ENCODE measurements at regions of chr1 and their contacts with region 1.

Region 1: DNA sequence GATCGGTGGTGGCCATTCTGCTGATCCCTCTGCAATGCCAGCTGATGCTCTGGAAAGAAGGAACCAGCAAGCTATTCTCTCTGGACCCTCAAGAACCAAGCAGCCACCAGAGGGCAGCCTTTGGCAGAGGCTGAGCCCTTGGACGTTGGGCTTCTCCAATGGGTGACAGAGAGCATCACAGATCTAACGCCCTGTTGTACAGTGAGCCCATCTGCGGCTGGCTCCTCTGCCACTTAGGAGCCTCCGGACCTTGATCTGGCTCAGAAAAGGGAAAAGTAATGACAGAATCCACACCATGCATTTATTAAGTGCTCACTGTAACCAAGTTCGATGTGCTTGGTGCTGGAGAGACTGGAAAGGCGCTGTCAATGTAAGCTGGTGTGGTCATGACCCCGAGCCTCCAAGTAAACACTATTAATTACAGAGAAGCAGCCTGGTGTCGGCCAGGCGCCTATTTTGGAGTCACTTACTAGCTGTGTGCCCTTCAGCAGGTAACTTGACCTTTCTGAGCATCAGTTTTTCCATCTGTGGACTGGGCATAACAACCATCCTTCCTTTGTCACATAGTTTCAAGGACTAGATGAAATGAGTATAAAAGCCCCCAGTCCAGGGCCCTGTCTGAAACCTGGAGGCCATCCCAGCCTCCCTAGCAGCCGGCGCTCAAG is 34.9 kb downstream of the ECE1 start:
- DNase-seq: peak; percentile 88 to 97 (median 93)
- H3K4me3 ChIP-seq: peak overlapping the region in 1 of 59 donors; percentile 10
- H3K27ac ChIP-seq: peak overlapping the region in 58 of 59 donors; percentile 18 to 95 (median 83)
- H3K27me3 ChIP-seq: no peaks in the 10 kb centered on the region
- CTCF ChIP-seq: peak; percentile 76 to 98 (median 94)

Region 2: DNA sequence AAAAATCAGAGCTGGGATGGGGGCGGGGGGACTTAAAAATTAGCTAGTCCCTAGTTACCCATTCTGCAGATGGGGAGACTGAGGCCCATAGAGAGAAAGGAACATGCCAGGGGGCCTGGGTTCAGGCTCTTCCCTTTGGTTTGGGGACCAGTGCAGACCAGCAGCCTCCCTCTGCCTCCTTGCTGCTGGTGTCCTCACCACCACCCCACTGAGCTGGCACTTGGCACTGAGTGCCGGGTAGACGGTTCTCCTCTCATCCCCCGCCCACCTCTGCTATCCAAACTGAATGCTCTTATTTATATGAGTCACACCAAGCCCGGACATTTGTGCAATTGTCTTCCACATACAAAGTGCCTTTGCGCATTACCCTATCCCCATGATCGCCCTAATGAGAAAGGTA is 808.6 kb before region 1 on chr1:
- intact Hi-C with region 1: no loop called
- DNase-seq: peak in 6 of 10 donors; percentile 56 to 87 (median 66)
- H3K4me3 ChIP-seq: no peak overlapping the region
- H3K27ac ChIP-seq: peak overlapping the region in 34 of 59 donors; percentile 2 to 97 (median 88)
- H3K27me3 ChIP-seq: no peaks in the 10 kb centered on the region
- CTCF ChIP-seq: no peak

Region 3: DNA sequence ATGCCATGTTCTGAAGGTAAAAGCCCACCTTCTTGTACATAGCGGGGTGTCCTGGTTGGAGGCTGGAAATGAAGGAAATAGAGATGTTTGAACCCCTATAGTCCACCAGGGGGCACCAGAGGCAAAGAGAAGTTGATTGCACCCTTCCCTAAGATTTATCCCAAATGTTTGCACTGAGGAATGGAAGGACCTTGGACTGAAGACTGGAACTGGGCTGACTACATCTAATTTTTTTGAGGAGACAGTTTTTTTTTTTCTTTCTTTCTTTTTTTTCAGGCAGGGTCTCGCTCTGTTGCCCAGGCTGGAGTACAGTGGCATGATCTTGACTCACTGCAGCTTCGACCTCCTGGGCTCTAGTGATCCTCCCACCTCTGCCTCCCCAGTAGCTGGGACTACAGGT is 23.4 kb before region 1 on chr1:
- intact Hi-C with region 1: no loop called
- DNase-seq: peak in 2 of 10 donors; percentile 56 to 70
- H3K4me3 ChIP-seq: no peak overlapping the region
- H3K27ac ChIP-seq: no peak overlapping the region
- H3K27me3 ChIP-seq: no peaks in the 10 kb centered on the region
- CTCF ChIP-seq: peak; percentile 73 to 95 (median 82)

Region 4: DNA sequence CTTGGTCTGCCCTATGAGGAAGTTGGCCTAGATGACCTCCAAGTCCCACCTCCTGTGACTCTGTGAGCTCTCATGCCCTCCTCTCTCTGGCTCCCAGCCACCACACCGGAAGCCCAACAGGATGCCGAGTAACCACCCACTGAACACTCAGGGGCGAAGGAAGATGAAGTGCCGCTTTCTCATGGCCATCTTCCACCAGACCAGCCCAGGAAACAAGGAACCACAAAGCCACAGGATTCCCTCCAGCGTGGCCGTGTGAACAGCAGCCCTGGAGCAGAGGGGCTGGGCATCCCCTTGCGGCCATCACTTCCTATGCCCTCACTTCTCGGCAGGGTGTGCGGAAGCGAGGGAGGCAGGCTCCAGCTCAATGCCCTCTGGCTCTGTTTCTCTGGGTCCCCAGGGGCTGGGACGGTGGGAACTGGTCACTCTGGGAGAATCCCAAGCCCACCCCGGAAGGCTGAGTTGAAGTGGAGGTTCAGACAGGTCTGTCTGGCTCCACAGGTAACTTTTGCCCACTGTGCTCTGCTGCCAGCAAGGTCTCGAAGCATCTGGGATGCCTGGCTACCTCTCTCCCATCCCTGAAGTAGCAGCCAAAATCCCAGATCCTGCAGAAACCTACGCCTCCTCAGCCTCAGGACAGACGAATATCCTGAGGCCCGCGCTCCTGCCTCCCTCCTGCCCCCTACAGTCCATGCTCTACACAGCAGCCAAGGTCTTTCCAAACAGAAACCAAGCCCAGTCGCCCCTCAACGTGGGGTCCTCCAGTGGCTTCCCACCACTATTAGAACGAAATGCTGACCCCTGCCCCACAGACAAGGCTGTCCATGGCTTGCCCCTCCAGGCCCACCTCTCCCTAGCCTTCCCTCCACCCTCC is 79.0 kb after region 1 on chr1:
- intact Hi-C with region 1: loop called in 1 of 2 experiments (anchors 5 kb)
- DNase-seq: peak in 8 of 10 donors; percentile 22 to 69 (median 62)
- H3K4me3 ChIP-seq: peak overlapping the region in 58 of 59 donors; percentile 6 to 69 (median 48)
- H3K27ac ChIP-seq: peak overlapping the region in 56 of 59 donors; percentile 14 to 91 (median 73)
- H3K27me3 ChIP-seq: no peaks in the 10 kb centered on the region
- CTCF ChIP-seq: peak; percentile 49 to 90 (median 81)

Region 5: DNA sequence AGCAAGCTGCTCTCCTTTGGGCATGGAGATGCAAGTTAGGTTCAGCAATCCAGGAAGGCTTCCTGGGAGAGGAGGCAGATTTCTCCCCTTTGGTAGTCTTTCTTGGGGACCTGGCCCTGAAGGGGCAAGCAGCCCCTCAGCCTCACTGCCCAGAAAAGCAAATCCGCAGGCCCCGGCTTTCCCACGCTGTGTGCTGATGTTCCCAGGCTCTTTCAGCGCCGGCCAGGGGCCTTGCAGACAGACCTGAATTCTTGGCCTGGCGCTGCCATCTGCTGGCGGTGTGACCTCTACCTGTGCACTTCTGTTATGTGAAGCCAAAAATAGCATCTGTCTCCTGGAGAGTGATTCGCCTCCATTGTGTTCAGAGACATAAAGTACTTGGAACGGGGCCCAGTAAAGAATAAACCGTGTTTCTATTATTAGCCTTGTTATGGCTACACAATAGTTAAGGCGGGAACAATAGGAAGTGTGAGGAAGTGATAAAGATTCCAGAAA is 318.6 kb after region 1 on chr1:
- intact Hi-C with region 1: loop called in 1 of 2 experiments (anchors 10 kb)
- DNase-seq: peak in 5 of 10 donors; percentile 59 to 81 (median 69)
- H3K4me3 ChIP-seq: no peak overlapping the region
- H3K27ac ChIP-seq: peak overlapping the region in 22 of 59 donors; percentile 0 to 76 (median 42)
- H3K27me3 ChIP-seq: no peaks in the 10 kb centered on the region
- CTCF ChIP-seq: peak in 55 of 56 donors; percentile 20 to 72 (median 54)